AG04449 (cell line): ENCODE measurements at regions of chr11 and their contacts with region 1.

Region 1: GRCh38 chr11:122209619-122210366 is 93.8 kb upstream of the BLID start:
- DNase-seq: no peak
- H3K4me3 ChIP-seq: no peak overlapping the region
- CTCF ChIP-seq: no peak

Region 2: DNA sequence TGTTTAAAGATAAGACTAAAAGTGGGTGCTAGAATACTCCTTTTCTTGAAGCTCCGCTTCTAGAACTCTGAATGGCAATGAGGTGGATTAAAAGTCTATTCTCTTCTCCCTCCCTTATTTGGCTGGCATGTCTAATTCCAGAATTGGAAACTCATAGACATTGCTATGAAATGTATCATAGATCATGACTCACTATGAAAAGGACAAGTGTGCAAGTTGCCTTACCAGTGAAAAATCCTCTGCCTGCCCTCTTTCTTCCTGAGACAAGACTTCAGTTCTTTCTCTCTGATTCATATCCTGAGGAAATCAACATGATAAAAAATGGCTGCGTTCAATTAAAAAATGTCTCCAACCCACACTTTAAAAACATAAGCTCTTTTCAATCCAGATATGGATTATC is 20.6 kb before region 1 on chr11:
- CTCF ChIA-PET with region 1: interaction called, 6 read pairs
- POLR2A ChIA-PET with region 1: interaction called, 11 read pairs
- DNase-seq: peak; percentile 96
- H3K4me3 ChIP-seq: no peak overlapping the region
- CTCF ChIP-seq: no peak

Region 3: DNA sequence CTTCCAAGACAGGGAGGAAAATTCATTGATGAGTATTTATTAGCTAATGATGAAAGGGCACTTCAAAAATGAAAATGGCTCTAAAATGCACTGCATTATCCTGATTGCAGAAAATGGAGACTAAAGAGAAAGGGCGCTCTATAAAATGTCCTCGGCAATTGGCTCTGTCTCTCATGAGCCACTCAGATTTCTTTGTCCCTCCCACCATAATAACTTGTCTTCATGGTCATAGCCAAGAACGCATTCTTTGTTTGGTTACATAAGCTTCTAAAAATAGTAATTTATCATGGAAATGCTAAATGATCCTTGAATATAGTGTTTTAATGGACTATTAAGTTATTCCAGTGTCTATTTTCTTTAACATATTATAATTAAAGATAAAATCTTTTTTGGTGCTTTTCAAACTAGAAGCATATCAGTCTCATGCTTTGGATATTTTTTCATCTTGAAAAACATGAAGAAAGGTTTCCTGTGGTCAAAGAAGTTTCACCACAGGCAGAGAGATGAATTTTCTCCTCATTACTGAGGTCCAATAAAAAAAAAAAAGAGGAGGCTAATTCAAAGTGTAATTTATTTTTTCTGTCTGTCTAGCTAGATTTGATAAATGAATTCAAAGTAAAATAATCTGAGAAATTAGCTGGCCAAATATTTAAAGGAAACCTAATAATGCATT is 144.4 kb after region 1 on chr11:
- CTCF ChIA-PET with region 1: no interaction called
- POLR2A ChIA-PET with region 1: no interaction called
- DNase-seq: no peak
- H3K4me3 ChIP-seq: no peak overlapping the region
- CTCF ChIP-seq: no peak